Panc1 (cell line): ENCODE measurements at regions of chr7 and their contacts with region 1.

Region 1: GRCh38 chr7:5494683-5495561 is 71.3 kb upstream of the TNRC18 start:
- DNase-seq: no peak
- ATAC-seq: peak; percentile 88
- H3K4me3 ChIP-seq: peak overlapping the region; percentile 3 to 42; a peak in 3 of 4 replicates
- H3K27ac ChIP-seq: peak overlapping the region; percentile 69
- H3K4me1 ChIP-seq: peaks cover 25% of the 10 kb centered on the region
- H3K27me3 ChIP-seq: no peaks in the 10 kb centered on the region
- CTCF ChIP-seq: peak; percentile 99

Region 2: DNA sequence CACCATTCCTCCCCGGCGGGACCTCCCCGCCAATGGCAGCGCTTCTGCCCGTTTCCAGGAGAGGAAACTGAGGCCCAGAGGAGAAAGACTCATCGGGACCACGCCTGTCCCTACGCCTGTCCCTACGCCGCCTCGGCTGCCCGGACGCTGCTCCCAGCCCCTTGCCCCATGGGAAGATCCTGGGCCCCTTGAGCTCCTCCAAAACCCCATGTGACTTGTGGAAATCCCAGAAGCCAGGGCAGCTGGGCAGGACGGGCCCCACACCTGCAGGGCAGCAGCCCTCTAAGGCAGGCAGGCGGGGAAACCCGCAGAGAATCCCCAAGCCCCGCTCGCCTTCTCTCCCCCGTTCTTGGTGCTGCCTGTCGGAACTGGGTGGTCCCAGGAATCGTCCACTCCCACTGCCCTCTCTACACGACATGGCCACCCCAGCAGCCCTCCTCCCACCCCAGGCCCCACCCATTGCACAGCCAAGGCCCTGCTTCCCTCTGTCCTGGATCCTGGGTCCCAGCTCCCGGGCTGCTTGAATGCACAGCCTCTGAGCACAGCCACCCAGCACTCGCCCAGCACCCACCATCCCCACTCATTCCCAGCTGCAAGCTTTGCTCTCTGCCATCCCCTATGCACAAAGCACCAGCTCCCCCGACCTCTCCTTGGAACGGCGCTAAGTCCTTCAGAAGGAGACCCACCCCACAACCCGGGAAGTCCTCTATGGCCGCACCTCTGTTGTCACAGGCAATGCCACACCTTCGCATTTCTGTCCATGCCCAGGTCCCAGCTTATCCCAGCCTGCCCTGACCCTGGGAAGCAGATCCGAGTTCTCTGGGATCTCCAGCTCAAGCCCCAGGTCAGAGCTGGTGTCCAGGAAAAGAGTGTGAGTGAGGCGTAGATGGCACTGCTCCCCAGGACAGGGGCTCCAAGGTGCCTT is 161.5 kb before region 1 on chr7:
- CTCF ChIA-PET with region 1: no interaction called
- POLR2A ChIA-PET with region 1: no interaction called
- in situ Hi-C with region 1: no loop called
- intact Hi-C with region 1: no loop called
- DNase-seq: no peak
- ATAC-seq: peak; percentile 51
- H3K4me3 ChIP-seq: no peak overlapping the region
- H3K27ac ChIP-seq: no peak overlapping the region
- H3K4me1 ChIP-seq: no peaks in the 10 kb centered on the region
- H3K27me3 ChIP-seq: no peaks in the 10 kb centered on the region
- CTCF ChIP-seq: no peak

Region 3: DNA sequence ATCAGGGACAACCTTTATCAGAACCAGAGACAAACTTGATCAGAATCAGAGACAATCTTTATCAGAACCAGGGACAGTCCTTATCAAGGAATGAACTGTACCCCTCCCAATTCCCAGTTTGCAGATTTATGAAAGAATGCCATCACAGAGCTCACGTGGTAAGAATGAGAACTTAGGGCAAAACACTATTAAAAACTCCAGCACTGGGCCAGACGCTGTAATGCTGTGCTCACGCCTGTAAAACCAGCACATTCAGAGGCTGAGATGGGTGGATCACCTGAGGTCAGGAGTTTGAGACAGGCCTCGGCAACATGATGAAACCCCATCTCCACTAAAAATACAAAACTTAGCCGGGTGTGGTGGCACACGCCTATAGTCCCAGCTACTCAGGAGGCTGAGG is 13.8 kb after region 1 on chr7:
- CTCF ChIA-PET with region 1: interaction called, 12 read pairs
- POLR2A ChIA-PET with region 1: no interaction called
- in situ Hi-C with region 1: no loop called
- intact Hi-C with region 1: no loop called
- DNase-seq: no peak
- ATAC-seq: no peak
- H3K4me3 ChIP-seq: no peak overlapping the region
- H3K27ac ChIP-seq: no peak overlapping the region
- H3K4me1 ChIP-seq: peaks cover 16% of the 10 kb centered on the region
- H3K27me3 ChIP-seq: no peaks in the 10 kb centered on the region
- CTCF ChIP-seq: no peak

Region 4: DNA sequence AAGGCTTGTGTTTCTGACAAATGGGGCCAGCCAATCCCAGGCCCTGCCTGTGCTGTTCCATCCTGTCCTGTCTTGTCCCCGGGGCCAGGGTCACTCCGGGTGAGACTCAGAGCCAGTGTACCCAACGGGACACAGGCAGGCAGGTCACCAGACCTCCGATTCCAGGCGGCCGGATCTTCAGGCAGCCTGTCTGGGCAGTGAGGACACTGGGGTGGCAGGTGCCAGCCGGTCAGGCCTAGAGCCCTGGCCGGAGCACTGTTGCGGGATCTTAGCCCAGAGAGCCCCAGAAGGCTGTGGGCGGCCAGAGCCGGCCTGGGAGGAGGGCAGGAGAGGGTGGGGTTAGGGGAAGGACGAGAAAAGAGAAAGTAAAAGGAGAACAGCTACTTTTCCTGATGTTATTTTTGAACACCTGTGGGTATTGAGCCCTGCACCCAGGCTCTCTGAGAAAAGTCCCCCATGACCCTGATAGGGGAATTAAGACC is 63.0 kb after region 1 on chr7:
- CTCF ChIA-PET with region 1: interaction called, 45 read pairs
- POLR2A ChIA-PET with region 1: interaction called, 3 read pairs
- in situ Hi-C with region 1: no loop called
- intact Hi-C with region 1: loop called (anchors 2 kb)
- DNase-seq: no peak
- ATAC-seq: peak; percentile 33
- H3K4me3 ChIP-seq: peak overlapping the region in 1 of 2 experiments; percentile 31; a peak in 2 of 4 replicates
- H3K27ac ChIP-seq: peak overlapping the region; percentile 92
- H3K4me1 ChIP-seq: peaks cover 40% of the 10 kb centered on the region
- H3K27me3 ChIP-seq: no peaks in the 10 kb centered on the region
- CTCF ChIP-seq: no peak

Region 5: GRCh38 chr7:5665094-5666025 is 170.4 kb after region 1 on chr7:
- CTCF ChIA-PET with region 1: interaction called, 17 read pairs
- POLR2A ChIA-PET with region 1: interaction called, 3 read pairs
- in situ Hi-C with region 1: no loop called
- intact Hi-C with region 1: loop called (anchors 5 kb)
- DNase-seq: peak; percentile 61
- ATAC-seq: peak; percentile 84
- H3K4me3 ChIP-seq: no peak overlapping the region
- H3K27ac ChIP-seq: no peak overlapping the region
- H3K4me1 ChIP-seq: no peaks in the 10 kb centered on the region; the same call in 1 of the 2 replicates
- H3K27me3 ChIP-seq: no peaks in the 10 kb centered on the region
- CTCF ChIP-seq: peak; percentile 96

Region 6: DNA sequence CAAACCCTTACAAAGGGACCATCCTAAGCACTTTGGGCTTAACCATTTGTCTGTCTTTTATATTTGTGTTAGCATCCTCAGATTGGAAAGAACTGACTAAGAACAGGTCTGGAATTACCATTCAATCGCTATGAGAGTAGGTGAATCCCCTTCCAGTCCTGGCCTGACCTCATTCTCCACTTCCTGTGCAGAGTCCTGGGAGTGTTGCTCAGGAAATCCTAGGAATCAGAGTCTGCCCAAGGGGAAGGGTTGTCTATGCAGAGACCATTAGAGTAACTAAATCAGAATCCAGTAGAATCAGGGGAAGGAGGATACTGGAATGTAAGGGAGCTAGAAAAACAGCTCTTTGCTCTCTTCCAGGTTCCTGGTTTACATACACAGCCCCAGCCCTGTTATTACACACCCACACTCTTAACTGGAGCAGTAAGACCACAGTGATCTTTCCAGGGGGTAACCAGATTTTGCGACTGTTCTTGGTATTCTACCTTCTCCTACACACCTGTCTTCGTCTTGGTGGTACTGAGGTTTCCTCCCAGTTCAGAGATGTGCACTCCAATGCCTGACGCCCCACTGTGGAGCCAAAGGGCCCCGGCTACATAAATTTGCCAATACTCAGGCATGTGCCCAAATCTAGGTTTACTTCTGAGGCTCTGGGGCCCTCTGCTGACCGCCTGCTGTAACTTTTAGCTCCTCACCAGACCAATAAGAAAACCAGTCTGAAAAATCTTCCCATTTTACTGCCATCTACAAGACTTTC is 182.8 kb after region 1 on chr7:
- CTCF ChIA-PET with region 1: interaction called, 4 read pairs
- POLR2A ChIA-PET with region 1: no interaction called
- in situ Hi-C with region 1: loop called (anchors 10 kb)
- intact Hi-C with region 1: loop called (anchors 5 kb)
- DNase-seq: no peak
- ATAC-seq: peak; percentile 74
- H3K4me3 ChIP-seq: no peak overlapping the region
- H3K27ac ChIP-seq: no peak overlapping the region
- H3K4me1 ChIP-seq: 0 out of 2 replicates have a peak, but pooled peaks cover 3% of the 10 kb centered on the region
- H3K27me3 ChIP-seq: no peaks in the 10 kb centered on the region
- CTCF ChIP-seq: no peak; the same call in 1 of the 2 replicates

Region 7: DNA sequence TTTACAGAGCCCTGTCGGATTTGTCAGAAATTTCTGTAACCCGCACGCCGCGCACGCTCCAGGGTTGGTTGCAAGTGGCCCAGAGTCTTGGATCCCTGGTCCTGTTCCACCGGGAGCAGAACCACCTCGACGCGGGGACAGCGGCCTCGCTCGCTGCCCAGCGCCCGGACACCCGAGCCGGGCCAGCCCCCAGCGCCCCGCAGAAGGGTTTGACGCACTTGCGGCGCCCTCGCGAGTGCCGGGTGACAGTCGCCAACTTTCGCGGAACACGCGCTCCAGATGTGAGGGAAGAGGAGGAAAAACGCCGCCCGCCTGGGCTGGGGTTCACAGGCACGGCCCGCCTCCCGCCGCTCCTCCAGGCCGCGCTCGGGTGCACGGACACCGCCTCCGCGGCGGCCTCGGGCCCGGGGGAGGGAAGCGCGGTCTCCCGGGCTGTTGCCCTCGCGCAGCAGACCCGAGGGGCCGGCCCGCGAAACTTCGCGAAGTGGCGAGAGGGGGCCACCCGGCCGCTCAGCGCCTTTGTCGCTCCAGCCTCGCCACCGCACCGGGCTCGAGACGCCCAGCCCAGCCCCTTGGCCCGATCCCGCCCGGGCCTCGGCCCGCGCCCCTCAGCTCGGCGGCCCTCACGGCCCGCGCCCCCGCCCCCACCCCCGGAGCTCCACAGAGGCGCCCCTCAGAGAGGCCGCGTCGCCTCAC is 286.0 kb after region 1 on chr7:
- CTCF ChIA-PET with region 1: no interaction called
- POLR2A ChIA-PET with region 1: no interaction called
- in situ Hi-C with region 1: no loop called
- intact Hi-C with region 1: no loop called
- DNase-seq: no peak
- ATAC-seq: peak; percentile 76
- H3K4me3 ChIP-seq: peak overlapping the region; percentile 56 to 76
- H3K27ac ChIP-seq: peak overlapping the region; percentile 84
- H3K4me1 ChIP-seq: peaks cover 38% of the 10 kb centered on the region
- H3K27me3 ChIP-seq: no peaks in the 10 kb centered on the region
- CTCF ChIP-seq: no peak